ENCODE measurements at regions of chr11 and their contacts with region 1.

Region 1: GRCh38 chr11:64688534-64688982 is 34.4 kb downstream of the NRXN2 start:
- DNase-seq: peak; percentile 90 to 99
- H3K4me3 ChIP-seq: peak overlapping the region; percentile 50 to 83 (median 80); a peak in 7 of 8 replicates
- H3K27ac ChIP-seq: no peak overlapping the region
- H3K4me1 ChIP-seq: peaks cover 0 to 4% (median 0%) of the 10 kb centered on the region in 4 experiments; a peak in 2 of 7 replicates
- H3K27me3 ChIP-seq: no peaks in the 10 kb centered on the region
- CTCF ChIP-seq: peak; percentile 85 to 98 (median 92)
- EP300 ChIP-seq: no peak
- POLR2A ChIP-seq: no peak
- RAD21 ChIP-seq: peak; percentile 63 to 69

Region 2: DNA sequence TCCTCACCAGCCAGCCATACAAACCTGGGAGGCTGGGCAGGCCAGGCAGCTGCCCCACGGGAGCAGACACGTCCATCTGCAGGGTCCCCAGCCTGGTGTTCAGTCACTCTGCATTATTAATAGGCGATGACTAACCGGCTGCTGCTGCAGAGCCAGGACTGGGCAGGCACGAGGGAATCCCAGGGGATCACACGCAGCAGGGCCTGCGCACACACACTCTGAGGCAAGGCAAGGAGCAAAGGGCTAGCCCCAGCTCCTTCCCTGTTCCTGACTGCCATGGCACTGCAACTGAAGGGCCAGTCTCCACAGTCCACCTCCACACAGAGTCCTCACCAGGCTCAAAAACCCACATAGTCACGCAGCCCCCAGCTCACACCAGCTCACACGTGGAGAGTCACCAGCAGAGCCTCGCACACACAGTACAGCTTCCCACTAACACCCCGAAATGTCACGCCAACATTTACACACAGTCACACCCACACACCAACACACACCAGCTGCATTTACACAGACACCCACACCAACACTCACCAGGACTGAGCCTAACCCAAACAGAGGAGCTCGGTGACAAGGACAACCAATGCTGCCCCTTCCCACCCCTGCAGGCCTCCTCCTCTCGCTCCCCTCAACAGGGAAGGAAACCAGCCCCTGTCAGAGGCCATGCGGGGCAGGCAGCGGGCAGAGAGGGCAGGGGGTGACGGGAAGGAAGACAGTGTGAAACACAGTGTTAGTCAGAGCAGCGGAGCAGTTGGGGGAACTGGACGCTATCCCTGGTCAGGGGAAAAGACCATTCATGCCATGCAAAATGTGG is 12.9 kb before region 1 on chr11:
- CTCF ChIA-PET with region 1: interaction called, 101 read pairs
- POLR2A ChIA-PET with region 1: no interaction called
- DNase-seq: no peak
- H3K4me3 ChIP-seq: no peak overlapping the region
- H3K27ac ChIP-seq: no peak overlapping the region
- H3K4me1 ChIP-seq: no peaks in the 10 kb centered on the region; a peak in 1 of 7 replicates
- H3K27me3 ChIP-seq: peaks cover 0 to 3% (median 0%) of the 10 kb centered on the region in 4 experiments; a peak in 3 of 7 replicates
- CTCF ChIP-seq: no peak
- EP300 ChIP-seq: no peak
- POLR2A ChIP-seq: no peak
- RAD21 ChIP-seq: no peak

Region 3: GRCh38 chr11:64713031-64713780 is 24.6 kb after region 1 on chr11:
- CTCF ChIA-PET with region 1: interaction called, 29 read pairs
- POLR2A ChIA-PET with region 1: interaction called, 3 read pairs
- DNase-seq: no peak
- H3K4me3 ChIP-seq: peak overlapping the region; percentile 28 to 55 (median 42)
- H3K27ac ChIP-seq: no peak overlapping the region
- H3K4me1 ChIP-seq: peaks cover 12 to 28% (median 20%) of the 10 kb centered on the region in 4 experiments
- H3K27me3 ChIP-seq: peaks cover 12 to 49% (median 33%) of the 10 kb centered on the region in 4 experiments
- CTCF ChIP-seq: no peak
- EP300 ChIP-seq: no peak
- POLR2A ChIP-seq: no peak
- RAD21 ChIP-seq: no peak

Region 4: GRCh38 chr11:64734811-64735724 is 46.5 kb after region 1 on chr11:
- CTCF ChIA-PET with region 1: interaction called, 13 read pairs
- POLR2A ChIA-PET with region 1: no interaction called
- DNase-seq: no peak
- H3K4me3 ChIP-seq: no peak overlapping the region
- H3K27ac ChIP-seq: no peak overlapping the region
- H3K4me1 ChIP-seq: peaks cover 0 to 19% (median 10%) of the 10 kb centered on the region in 4 experiments; a peak in 6 of 7 replicates
- H3K27me3 ChIP-seq: no peaks in the 10 kb centered on the region; a peak in 2 of 7 replicates
- CTCF ChIP-seq: no peak
- EP300 ChIP-seq: no peak
- POLR2A ChIP-seq: no peak
- RAD21 ChIP-seq: no peak

Region 5: GRCh38 chr11:64935359-64936081 is 247.0 kb after region 1 on chr11 and contains the start of gene GPHA2:
- CTCF ChIA-PET with region 1: no interaction called
- POLR2A ChIA-PET with region 1: no interaction called
- DNase-seq: peak; percentile 53 to 61
- H3K4me3 ChIP-seq: peak within 1 kb of the TSS in 2 of 4 experiments; percentile 19 to 38; a peak in 2 of 8 replicates
- H3K27ac ChIP-seq: no peak within 1 kb of the TSS
- H3K4me1 ChIP-seq: peaks cover 1 to 14% (median 7%) of the 10 kb centered on the region in 4 experiments
- H3K27me3 ChIP-seq: no peaks in the 10 kb centered on the region; a peak in 1 of 7 replicates
- CTCF ChIP-seq: peak in 2 of 3 experiments; percentile 1 to 10; a peak in 1 of 4 replicates
- EP300 ChIP-seq: no peak
- POLR2A ChIP-seq: peak in 1 of 2 experiments; percentile 41; a peak in 1 of 3 replicates
- RAD21 ChIP-seq: peak in 1 of 2 experiments; percentile 21; a peak in 2 of 4 replicates
- total RNA-seq, gene GPHA2: 0.97 and 1.5 TPM in 2 replicates

Measured in H1 (cell line).